Common myeloid progenitor, CD34-positive (primary cell): ENCODE measurements at regions of chr19 and their contacts with region 1.

Region 1: DNA sequence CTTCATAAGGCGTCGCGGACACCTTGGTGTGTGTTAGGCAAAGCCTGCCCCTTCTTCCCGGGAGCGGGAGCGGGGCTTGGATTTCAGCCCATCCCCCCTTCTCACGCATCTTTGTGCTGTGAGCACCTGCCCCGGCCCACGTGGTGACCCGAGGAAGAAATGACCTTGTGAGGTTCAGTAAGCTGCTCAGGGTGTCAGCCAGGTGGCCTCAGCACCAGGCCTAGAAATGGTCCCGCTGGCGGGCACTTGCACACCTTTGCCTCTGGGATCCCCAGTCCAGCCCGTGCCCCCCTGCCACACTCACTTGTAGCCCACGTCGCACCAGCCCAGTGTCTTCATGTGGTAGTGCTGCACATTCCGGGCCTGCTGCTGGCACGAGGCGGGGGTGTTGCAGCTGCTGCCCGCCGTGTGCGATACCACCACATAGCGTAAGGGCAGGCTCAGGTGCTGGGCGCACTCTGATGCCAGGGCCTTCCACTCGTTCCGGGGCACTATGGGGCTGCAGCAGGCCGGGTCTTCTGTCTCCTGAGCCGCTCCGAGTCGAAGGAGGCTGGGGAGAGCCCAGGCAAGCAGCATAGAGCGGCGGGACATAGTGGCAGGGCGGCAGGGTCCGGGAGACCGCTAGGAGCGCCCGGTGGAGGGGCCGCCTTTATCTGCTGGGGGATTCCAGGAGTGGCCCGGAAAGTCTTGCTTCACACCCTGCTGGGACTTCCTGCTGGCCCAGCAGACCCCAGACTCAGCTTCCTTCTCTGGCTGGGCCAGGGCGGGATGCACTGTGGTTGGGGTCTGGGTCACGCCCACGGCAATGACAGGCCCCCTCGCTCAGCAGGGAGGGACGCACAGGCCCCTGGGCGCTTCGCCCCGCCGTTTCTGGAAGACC is at the start of gene PGLYRP1:
- DNase-seq: no peak
- H3K4me3 ChIP-seq: no peak within 1 kb of the TSS
- H3K27ac ChIP-seq: no peak within 1 kb of the TSS
- H3K4me1 ChIP-seq: peaks cover 0 to 5% (median 0%) of the 10 kb centered on the region in 4 experiments
- H3K27me3 ChIP-seq: peaks cover 0 to 56% (median 19%) of the 10 kb centered on the region in 5 experiments

Region 2: GRCh38 chr19:46042252-46042883 is 19.7 kb after region 1 on chr19:
- CTCF ChIA-PET with region 1: interaction called, 16 read pairs
- POLR2A ChIA-PET with region 1: no interaction called
- DNase-seq: no peak
- H3K4me3 ChIP-seq: no peak overlapping the region
- H3K27ac ChIP-seq: no peak overlapping the region
- H3K4me1 ChIP-seq: no peaks in the 10 kb centered on the region
- H3K27me3 ChIP-seq: peaks cover 3 to 66% (median 20%) of the 10 kb centered on the region in 5 experiments

Region 3: DNA sequence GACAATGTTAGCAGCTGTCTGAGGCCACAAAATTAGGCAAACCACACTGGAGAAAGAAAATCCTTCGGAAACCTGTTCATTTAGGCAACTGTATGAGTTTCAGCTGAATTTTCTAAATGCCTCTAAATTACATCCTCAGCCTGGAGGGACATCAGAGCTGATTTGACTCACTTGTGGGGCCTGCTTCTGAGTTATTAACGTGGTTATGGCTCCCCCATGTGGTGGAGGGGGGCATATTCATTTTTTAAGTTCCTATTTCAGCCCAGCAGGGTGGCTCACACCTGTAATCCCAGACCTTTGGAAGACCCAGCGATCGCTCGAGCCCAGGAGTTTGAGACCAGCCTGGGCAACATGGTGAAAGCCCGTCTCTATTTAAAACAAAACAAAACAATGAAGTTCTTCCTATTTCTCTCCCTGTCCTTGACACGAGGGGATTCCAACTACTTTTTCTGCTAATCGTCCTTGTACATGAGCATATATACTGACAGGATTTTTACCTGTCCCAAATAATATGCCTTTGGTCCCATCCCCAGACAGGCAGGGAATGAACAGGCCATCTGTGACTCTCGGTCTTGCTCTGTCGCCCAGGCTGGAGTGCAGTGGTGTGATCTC is 242.7 kb after region 1 on chr19:
- CTCF ChIA-PET with region 1: interaction called, 36 read pairs
- POLR2A ChIA-PET with region 1: no interaction called
- DNase-seq: peak; percentile 78 to 89 (median 86)
- H3K4me3 ChIP-seq: no peak overlapping the region
- H3K27ac ChIP-seq: no peak overlapping the region
- H3K4me1 ChIP-seq: peaks cover 0 to 2% (median 0%) of the 10 kb centered on the region in 4 experiments
- H3K27me3 ChIP-seq: peaks cover 0 to 56% (median 10%) of the 10 kb centered on the region in 5 experiments